Activated B cell treated with CpG ODN at 0.5 μM for 24 hours (primary cell): ENCODE measurements at regions of chr2 and their contacts with region 1.

Region 1: DNA sequence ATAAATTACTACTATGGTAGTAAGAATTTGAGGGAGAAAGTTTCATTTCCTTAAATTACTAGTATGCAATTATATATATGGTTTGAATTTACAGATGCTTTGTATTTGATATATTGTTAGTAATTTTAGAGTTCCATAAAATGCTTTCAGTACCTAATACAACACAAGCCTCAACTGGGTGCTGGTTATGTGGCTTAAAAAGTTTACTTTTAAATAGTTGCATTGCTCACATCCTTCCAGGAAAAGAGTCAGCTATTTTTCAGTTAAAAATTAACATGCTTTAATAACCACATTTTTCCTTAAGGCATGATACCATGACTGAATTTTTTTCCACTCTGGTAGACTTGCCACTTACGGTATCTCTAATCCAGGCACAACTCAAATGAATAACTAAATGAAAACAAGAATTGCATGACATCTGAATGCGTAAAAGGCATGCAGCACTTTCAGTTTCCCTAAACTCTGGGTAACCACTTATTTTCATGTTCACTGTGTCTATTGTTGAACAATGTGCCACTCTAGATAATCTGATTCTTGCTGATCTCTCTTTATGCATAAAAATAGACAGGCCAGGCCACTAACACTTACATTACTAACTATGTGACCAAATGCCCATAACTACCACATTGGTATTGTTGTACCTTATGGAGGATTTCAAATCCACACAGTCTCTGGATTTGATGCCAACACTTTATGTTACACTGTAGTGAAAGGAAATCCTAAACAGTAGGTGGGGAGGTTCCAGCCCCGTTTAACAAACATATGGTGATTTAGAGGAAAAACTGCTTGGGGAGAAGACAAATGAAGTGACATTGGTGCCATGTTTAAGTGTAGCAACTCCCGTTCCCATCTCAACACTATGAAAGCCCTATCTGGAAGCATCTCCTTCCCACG is 35.5 kb upstream of the SLC35F5 start:
- DNase-seq: no peak
- ATAC-seq: peak; percentile 77
- H3K4me3 Mint-ChIP-seq: peak overlapping the region; percentile 36
- H3K27ac Mint-ChIP-seq: peak overlapping the region; percentile 33
- H3K4me1 Mint-ChIP-seq: peaks cover 28% of the 10 kb centered on the region
- H3K27me3 Mint-ChIP-seq: no peaks in the 10 kb centered on the region
- CTCF ChIP-seq: no peak

Region 2: DNA sequence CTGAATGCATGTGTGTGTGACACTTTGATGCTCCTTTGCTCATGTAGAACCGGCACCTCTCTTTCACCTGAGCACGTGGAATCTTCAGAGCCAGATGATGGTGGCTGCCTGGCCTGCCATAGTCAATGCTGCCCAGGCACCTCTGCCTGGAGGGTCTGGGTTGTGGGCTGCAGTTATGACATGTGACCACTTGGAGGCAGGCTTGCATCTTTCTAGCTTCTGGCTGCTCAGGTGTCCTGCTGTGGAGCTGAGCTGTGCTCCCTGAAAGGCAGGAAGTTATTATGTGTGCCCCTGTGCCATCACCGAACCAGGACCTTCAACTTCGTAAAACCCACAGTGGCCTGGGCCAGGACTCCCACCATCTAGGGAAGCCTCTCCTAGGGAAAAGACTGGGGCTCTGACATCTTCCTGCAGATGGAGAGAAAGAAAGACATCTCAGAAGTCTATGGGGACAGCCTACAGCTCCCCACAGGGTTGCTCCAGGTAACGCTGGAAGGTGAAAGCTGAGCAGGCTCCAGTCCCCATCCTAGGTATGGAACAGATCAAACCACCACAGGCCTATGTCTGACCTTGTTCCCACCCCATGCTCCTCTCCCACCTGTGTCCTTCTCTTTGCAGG is 587.9 kb before region 1 on chr2:
- CTCF ChIA-PET with region 1: no interaction called
- POLR2A ChIA-PET with region 1: no interaction called
- intact Hi-C with region 1: no loop called
- DNase-seq: peak; percentile 54
- ATAC-seq: peak; percentile 78
- H3K4me3 Mint-ChIP-seq: no peak overlapping the region
- H3K27ac Mint-ChIP-seq: peak overlapping the region; percentile 74
- H3K4me1 Mint-ChIP-seq: peaks cover 16% of the 10 kb centered on the region
- H3K27me3 Mint-ChIP-seq: no peaks in the 10 kb centered on the region
- CTCF ChIP-seq: peak; percentile 27

Region 3: DNA sequence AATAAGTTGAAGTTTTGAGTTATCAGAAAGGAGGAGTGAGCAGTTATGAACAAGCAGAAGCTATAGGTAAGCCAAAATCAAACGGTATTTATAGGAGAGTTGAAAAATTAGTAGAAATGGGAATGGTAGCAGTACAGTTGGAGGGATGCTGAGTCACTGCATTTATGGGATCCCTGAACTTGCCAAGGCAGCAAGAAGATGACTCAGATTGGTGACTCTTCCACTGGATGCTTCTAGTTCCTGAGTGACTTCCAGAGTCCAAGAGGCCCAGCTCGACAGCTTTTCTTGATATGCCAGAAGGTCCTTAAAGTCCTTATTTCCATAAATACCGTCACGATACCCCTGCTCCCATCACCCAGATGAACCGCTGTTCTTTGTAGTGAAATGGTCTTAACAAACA is 66.8 kb after region 1 on chr2:
- CTCF ChIA-PET with region 1: no interaction called
- POLR2A ChIA-PET with region 1: no interaction called
- intact Hi-C with region 1: loop called (anchors 5 kb)
- DNase-seq: no peak
- ATAC-seq: no peak
- H3K4me3 Mint-ChIP-seq: peak overlapping the region; percentile 76
- H3K27ac Mint-ChIP-seq: peak overlapping the region; percentile 93
- H3K4me1 Mint-ChIP-seq: peaks cover 93% of the 10 kb centered on the region
- H3K27me3 Mint-ChIP-seq: no peaks in the 10 kb centered on the region
- CTCF ChIP-seq: no peak